ENCODE measurements at regions of chr6 and their contacts with region 1.

Region 1: GRCh38 chr6:119349323-119350042 is at the start of gene MAN1A1:
- DNase-seq: peak; percentile 88
- H3K4me3 Mint-ChIP-seq: peak within 1 kb of the TSS; percentile 84
- H3K27ac Mint-ChIP-seq: peak within 1 kb of the TSS; percentile 96
- H3K4me1 Mint-ChIP-seq: peaks cover 37% of the 10 kb centered on the region
- H3K27me3 Mint-ChIP-seq: no peaks in the 10 kb centered on the region
- total RNA-seq, gene MAN1A1: 14.8 to 15.1 TPM

Region 2: GRCh38 chr6:118843685-118844390 is 505.6 kb before region 1 on chr6:
- CTCF ChIA-PET with region 1: no interaction called
- intact Hi-C with region 1: loop called (anchors 1 kb)
- DNase-seq: peak; percentile 50
- H3K4me3 Mint-ChIP-seq: no peak overlapping the region
- H3K27ac Mint-ChIP-seq: peak overlapping the region; percentile 2
- H3K4me1 Mint-ChIP-seq: peaks cover 23% of the 10 kb centered on the region
- H3K27me3 Mint-ChIP-seq: no peaks in the 10 kb centered on the region

Region 3: GRCh38 chr6:119147101-119148053 is 202.1 kb before region 1 on chr6:
- CTCF ChIA-PET with region 1: interaction called, 7 read pairs
- intact Hi-C with region 1: loop called (anchors 1 kb)
- DNase-seq: peak; percentile 77
- H3K4me3 Mint-ChIP-seq: no peak overlapping the region
- H3K27ac Mint-ChIP-seq: peak overlapping the region; percentile 48
- H3K4me1 Mint-ChIP-seq: peaks cover 43% of the 10 kb centered on the region
- H3K27me3 Mint-ChIP-seq: peaks cover 6% of the 10 kb centered on the region

Region 4: DNA sequence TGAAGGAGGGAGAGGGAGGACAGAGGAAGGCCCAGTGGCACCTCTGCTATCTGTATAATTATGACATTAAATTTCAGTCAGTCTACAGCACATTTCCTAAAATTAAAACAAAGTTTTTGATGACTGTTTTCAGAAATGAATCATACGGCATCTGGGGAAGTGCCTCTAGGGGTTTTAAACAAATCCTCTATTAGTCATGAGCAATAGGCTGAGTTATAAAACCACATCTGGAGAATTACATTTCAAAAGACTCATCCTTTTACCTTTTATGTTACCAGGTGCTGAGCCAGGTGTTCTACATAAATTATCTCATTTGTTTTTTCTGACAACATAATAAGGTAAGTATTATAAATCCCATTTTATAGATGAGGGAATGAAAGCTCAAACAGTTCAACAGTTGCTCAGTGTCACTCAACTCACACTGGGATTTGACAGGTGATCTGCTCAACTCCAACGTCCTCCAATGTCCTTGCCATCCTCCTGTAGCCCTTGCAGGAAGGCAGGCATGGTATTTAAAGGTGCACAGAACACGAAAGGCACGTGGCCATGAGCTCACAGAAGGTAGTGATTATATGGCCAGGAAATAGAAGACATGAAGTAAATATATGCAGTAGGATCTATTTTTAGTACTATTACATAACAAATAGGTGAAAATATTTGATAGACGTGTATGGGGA is 184.3 kb after region 1 on chr6:
- CTCF ChIA-PET with region 1: no interaction called
- intact Hi-C with region 1: loop called (anchors 1 kb)
- DNase-seq: peak; percentile 16
- H3K4me3 Mint-ChIP-seq: no peak overlapping the region
- H3K27ac Mint-ChIP-seq: no peak overlapping the region
- H3K4me1 Mint-ChIP-seq: peaks cover 9% of the 10 kb centered on the region
- H3K27me3 Mint-ChIP-seq: peaks cover 6% of the 10 kb centered on the region

Region 5: GRCh38 chr6:119856136-119856535 is 506.7 kb after region 1 on chr6:
- CTCF ChIA-PET with region 1: no interaction called
- intact Hi-C with region 1: loop called (anchors 5 kb)
- DNase-seq: peak; percentile 23
- H3K4me3 Mint-ChIP-seq: no peak overlapping the region
- H3K27ac Mint-ChIP-seq: no peak overlapping the region
- H3K4me1 Mint-ChIP-seq: peaks cover 10% of the 10 kb centered on the region
- H3K27me3 Mint-ChIP-seq: peaks cover 7% of the 10 kb centered on the region

Region 6: GRCh38 chr6:120173250-120173649 is 823.8 kb after region 1 on chr6:
- CTCF ChIA-PET with region 1: no interaction called
- intact Hi-C with region 1: no loop called
- DNase-seq: no peak
- H3K4me3 Mint-ChIP-seq: no peak overlapping the region
- H3K27ac Mint-ChIP-seq: no peak overlapping the region
- H3K4me1 Mint-ChIP-seq: no peaks in the 10 kb centered on the region
- H3K27me3 Mint-ChIP-seq: no peaks in the 10 kb centered on the region

Region 7: GRCh38 chr6:121334299-121335086 is 1985.0 kb after region 1 on chr6 and contains the start of gene TBC1D32:
- CTCF ChIA-PET with region 1: no interaction called
- intact Hi-C with region 1: loop called (anchors 1 kb)
- DNase-seq: peak; percentile 87
- H3K4me3 Mint-ChIP-seq: peak within 1 kb of the TSS; percentile 98
- H3K27ac Mint-ChIP-seq: peak within 1 kb of the TSS; percentile 97
- H3K4me1 Mint-ChIP-seq: peaks cover 38% of the 10 kb centered on the region
- H3K27me3 Mint-ChIP-seq: no peaks in the 10 kb centered on the region
- total RNA-seq, gene TBC1D32: 6.9 to 8.2 TPM

Measured in activated naive CD4-positive, alpha-beta T cell treated with anti-CD3 and anti-CD28 coated beads for 36 hours (primary cell).